ENCODE measurements at regions of chr19 and their contacts with region 1.

Region 1: DNA sequence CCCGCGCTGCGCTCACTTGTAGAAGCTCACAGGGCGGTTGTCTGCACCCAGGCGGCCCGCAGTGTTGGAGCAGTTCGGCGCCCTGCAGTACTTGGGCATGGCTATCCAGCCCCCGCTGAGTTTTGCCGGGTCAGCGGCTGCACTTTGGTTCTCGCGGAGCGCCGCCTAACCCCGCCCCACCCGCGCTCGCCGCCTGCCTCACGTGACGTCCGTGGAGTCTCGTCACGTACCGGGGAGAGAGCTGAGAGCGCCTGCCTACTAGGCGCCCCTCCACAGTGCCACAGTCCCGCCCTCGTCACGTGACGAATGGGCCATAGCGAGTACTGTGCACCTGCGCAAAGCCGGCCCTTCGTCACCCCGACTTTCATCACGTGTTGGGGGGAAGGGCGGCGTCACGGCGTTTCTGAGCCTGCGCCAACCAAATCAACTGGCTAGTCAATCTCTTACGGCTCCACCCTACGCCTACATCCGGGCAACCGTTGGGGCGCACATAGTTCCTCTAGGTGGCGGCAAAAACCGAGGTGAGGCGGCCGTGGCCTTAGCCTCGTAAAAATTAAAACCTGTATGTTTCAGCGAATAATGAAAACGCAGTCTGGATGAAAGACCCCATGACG is at the start of gene THAP8:
- DNase-seq: peak; percentile 99
- H3K4me3 ChIP-seq: peak within 1 kb of the TSS; percentile 83
- H3K27ac ChIP-seq: peak within 1 kb of the TSS; percentile 97
- H3K27me3 ChIP-seq: no peaks in the 10 kb centered on the region
- CTCF ChIP-seq: peak; percentile 60
- polyA plus RNA-seq, gene THAP8: 3.9 and 5.6 TPM in 2 replicates

Region 2: DNA sequence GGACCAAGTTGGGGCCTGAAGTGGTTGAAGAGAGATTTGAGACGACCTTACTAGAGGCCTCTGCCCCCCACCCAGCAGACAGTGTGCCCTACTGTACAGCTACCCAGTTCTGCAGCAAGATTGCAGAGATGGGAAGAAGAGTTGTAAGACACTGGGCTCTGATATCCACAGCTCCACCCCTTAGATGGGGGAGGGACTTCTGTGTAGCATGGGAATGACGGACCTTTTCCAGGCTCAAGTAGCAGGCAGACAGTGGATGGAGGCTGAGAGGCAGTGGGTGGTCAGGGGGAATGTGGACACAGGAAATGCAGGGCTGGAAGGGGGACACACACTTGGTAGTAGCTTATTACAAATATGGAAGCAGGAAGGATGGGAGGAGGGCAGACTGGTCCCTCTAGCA is 105.1 kb before region 1 on chr19:
- CTCF ChIA-PET with region 1: interaction called, 10 read pairs
- POLR2A ChIA-PET with region 1: no interaction called
- DNase-seq: no peak
- H3K4me3 ChIP-seq: no peak overlapping the region
- H3K27ac ChIP-seq: no peak overlapping the region
- H3K27me3 ChIP-seq: peaks cover 10% of the 10 kb centered on the region
- CTCF ChIP-seq: no peak

Region 3: DNA sequence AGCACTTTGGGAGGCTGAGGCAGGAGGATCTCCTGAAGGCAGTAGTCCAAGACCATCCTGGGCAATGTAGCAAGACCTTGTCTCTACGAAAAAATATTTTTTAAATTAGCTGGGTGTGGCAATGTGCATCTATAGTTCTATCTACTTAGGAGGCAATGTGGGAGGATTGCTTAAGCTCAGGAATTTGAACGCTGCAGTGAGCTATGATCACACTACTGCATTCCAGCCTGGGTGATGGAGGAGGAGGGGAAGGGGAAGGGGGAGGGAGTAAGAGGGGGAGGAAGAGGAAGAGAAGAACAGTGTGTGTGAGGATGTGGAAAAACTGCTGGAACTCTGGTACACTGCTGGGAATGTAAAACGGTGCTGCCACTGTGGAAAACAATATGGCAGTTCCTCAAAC is 12.4 kb before region 1 on chr19:
- CTCF ChIA-PET with region 1: interaction called, 3 read pairs
- POLR2A ChIA-PET with region 1: interaction called, 10 read pairs
- DNase-seq: peak; percentile 59
- H3K4me3 ChIP-seq: no peak overlapping the region
- H3K27ac ChIP-seq: peak overlapping the region; percentile 59
- H3K27me3 ChIP-seq: no peaks in the 10 kb centered on the region
- CTCF ChIP-seq: no peak

Measured in AG04450 (cell line).